Cardiac septum (tissue), 1 donor: ENCODE measurements at regions of chr5 and their contacts with region 1.

Region 1: DNA sequence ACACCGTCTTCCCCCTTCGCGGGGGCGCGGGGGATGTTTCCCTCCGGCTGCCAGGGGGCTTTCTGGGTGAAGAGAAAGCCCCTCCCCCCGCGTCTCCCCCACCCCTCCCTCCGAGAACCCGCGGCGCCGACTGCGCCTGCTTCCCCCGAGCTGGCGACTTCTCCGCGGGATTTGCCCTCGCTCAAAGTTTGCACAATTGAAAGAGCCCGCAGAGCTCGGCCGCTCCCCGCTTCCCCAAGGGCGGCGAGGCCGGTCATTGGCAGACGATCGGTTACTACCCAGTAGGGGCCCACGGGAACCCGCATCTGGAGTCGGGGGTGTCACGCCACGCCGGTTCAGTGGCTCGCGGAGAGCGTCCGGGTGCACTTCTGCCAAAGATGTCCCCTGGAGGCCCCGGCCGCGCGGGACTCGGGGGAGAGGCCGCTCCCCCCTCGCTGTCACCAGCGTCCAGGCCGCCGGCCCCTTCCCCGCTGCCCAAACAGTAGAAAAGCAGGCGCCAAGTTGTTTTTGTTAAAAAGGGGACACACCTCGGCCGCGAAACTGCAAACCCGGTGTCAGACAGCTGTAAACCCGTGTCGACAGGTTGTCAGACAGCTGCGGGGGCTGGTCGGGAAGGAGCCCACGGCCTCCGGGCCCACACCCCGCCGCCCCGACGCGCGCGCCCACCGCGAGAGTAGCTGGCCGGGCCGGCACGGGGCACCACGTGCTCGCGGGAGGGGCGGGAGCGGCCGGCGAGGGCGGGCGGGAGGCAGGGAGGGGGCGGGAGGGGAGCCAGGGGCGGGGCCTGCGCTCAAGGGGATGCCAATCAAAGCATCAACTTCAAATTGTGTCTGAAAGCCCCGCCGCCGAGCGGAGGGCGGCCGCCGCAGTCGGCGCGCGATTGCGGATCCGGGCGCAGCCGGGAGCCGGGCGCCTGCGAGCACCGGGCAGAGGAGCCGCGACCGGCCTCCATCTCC is at the start of gene IRX1:
- DNase-seq: no peak
- total RNA-seq, gene IRX1: 1.2 TPM

Region 2: GRCh38 chr5:2751592-2752021 is 843.7 kb before region 1 on chr5 and contains the start of gene IRX2:
- intact Hi-C with region 1: loop called (anchors 5 kb)
- DNase-seq: peak; percentile 86
- total RNA-seq, gene IRX2: 3.2 TPM

Region 3: GRCh38 chr5:3584724-3585531 is 10.4 kb before region 1 on chr5:
- intact Hi-C with region 1: no loop called
- DNase-seq: no peak